ENCODE measurements at regions of chr6 and their contacts with region 1.

Region 1: GRCh38 chr6:110039364-110039980 is 61.4 kb downstream of the GPR6 start:
- DNase-seq: peak; percentile 65
- ATAC-seq: peak; percentile 96
- H3K4me3 ChIP-seq: peak overlapping the region; percentile 73
- H3K27ac ChIP-seq: peak overlapping the region; percentile 17; the same call in 1 of the 2 replicates
- H3K4me1 ChIP-seq: peaks cover 3% of the 10 kb centered on the region
- H3K27me3 ChIP-seq: no peaks in the 10 kb centered on the region
- CTCF ChIP-seq: peak; percentile 90 to 97 (median 92)
- EP300 ChIP-seq: no peak
- POLR2A ChIP-seq: no peak; the same call in 1 of the 2 replicates
- RAD21 ChIP-seq: peak; percentile 98

Region 2: DNA sequence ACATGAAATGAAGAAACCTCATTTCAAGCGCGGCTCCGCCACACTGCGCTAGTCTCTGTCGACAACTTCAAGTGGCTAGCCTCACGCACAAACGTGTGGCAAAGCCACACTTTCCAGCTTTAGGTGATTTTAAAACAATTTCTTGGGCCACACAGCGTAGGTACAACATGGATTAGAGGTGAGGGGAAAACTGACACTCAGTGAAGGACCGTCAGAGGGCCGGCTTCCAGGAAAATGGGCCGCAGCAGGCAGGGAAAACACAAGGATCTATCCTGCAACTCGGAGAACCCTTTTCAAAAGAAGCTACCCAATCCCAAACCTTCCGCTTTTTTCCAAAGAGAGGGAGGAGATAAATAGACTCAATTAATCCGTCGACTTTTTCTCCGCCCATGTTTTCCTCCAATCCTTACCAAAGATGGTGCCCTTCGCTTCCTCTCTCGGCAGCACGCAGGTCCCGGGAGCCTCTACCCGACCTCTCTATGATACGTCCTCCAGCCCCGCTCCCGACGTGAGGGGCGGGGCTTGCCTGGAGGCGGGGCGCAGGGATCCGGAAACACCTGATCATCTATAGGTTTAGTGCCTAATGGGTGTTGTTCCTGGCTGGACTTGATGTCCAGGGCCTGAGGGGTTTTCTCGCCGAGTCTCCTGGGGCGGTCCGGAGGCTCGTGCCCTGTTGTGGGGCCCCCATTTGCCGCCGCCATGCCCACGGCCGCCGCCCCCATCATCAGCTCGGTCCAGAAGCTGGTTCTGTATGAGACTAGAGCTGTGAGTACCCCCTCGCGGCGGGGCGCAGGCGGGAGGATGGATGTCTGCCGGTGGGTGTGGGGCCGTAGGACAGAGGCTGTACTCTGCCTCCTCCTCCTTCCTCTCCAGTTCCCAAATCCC is 348.5 kb before region 1 on chr6 and contains the starts of genes AK9 and FIG4:
- CTCF ChIA-PET with region 1: interaction called, 41 read pairs
- POLR2A ChIA-PET with region 1: no interaction called
- RAD21 ChIA-PET with region 1: interaction called, 13 read pairs
- SMC1A ChIA-PET with region 1: interaction called, 8 read pairs
- in situ Hi-C with region 1: no loop called
- intact Hi-C with region 1: no loop called
- DNase-seq: peak; percentile 61
- ATAC-seq: peak; percentile 97
- H3K4me3 ChIP-seq: peak within 1 kb of the TSS; percentile 91
- H3K27ac ChIP-seq: peak within 1 kb of the TSS; percentile 67
- H3K4me1 ChIP-seq: peaks cover 5% of the 10 kb centered on the region
- H3K27me3 ChIP-seq: no peaks in the 10 kb centered on the region
- CTCF ChIP-seq: peak in 2 of 3 experiments; percentile 16 to 29; a peak in 3 of 6 replicates
- EP300 ChIP-seq: no peak
- POLR2A ChIP-seq: peak; percentile 67
- RAD21 ChIP-seq: peak; percentile 17; the same call in 1 of the 2 replicates
- polyA plus RNA-seq, gene AK9: 4.0 to 5.8 TPM
- polyA plus RNA-seq, gene FIG4: 3.8 to 4.7 TPM

Region 3: GRCh38 chr6:109824105-109824504 is 215.4 kb before region 1 on chr6:
- CTCF ChIA-PET with region 1: interaction called, 11 read pairs
- POLR2A ChIA-PET with region 1: no interaction called
- RAD21 ChIA-PET with region 1: no interaction called
- SMC1A ChIA-PET with region 1: no interaction called
- in situ Hi-C with region 1: no loop called
- intact Hi-C with region 1: no loop called
- DNase-seq: no peak
- ATAC-seq: no peak
- H3K4me3 ChIP-seq: no peak overlapping the region
- H3K27ac ChIP-seq: no peak overlapping the region
- H3K4me1 ChIP-seq: peaks cover 17% of the 10 kb centered on the region
- H3K27me3 ChIP-seq: no peaks in the 10 kb centered on the region
- CTCF ChIP-seq: no peak
- EP300 ChIP-seq: no peak
- POLR2A ChIP-seq: no peak
- RAD21 ChIP-seq: no peak

Region 4: DNA sequence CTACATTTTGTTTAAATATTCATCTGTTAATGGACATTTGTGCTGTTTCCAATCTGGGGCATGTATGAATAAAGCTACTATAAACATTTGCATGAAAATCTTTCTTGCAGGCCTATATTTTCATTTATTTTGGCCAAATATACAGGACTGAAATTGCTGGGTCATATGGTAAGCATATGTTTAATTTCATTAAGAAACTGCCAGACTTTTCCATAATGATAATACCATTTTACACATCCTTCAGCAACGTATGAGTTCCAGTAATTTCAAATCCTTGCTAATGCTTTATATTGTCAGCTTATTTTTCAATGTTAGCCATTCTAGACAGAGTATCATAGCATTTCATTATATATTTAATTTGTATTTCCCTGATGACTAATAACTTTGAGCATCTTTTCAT is 10.3 kb before region 1 on chr6:
- CTCF ChIA-PET with region 1: interaction called, 29 read pairs
- POLR2A ChIA-PET with region 1: no interaction called
- RAD21 ChIA-PET with region 1: interaction called, 4 read pairs
- SMC1A ChIA-PET with region 1: interaction called, 9 read pairs
- in situ Hi-C with region 1: no loop called
- intact Hi-C with region 1: no loop called
- DNase-seq: no peak
- ATAC-seq: no peak
- H3K4me3 ChIP-seq: no peak overlapping the region
- H3K27ac ChIP-seq: no peak overlapping the region
- H3K4me1 ChIP-seq: no peaks in the 10 kb centered on the region
- H3K27me3 ChIP-seq: no peaks in the 10 kb centered on the region
- CTCF ChIP-seq: no peak
- EP300 ChIP-seq: no peak
- POLR2A ChIP-seq: no peak
- RAD21 ChIP-seq: no peak

Region 5: DNA sequence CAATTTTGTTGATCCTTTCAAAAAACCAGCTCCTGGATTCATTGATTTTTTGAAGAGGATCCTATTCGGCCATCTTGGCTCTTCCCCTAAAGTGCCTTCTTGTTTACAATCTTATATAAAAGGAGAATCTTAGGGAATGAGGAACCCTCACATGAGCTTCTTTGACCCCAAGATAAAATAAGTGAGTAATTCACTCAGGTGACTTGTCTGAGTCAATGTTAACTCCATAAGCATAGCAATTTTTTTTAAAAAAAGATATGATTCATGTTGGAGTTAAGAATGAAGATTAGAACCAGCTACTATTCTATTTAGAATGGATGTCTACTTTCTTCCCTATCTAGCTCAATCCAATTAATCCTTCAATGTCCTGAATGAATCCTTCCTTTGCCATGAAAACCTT is 119.0 kb after region 1 on chr6:
- CTCF ChIA-PET with region 1: no interaction called
- POLR2A ChIA-PET with region 1: no interaction called
- RAD21 ChIA-PET with region 1: no interaction called
- SMC1A ChIA-PET with region 1: no interaction called
- in situ Hi-C with region 1: no loop called
- intact Hi-C with region 1: no loop called
- DNase-seq: no peak
- ATAC-seq: no peak
- H3K4me3 ChIP-seq: no peak overlapping the region
- H3K27ac ChIP-seq: no peak overlapping the region
- H3K4me1 ChIP-seq: no peaks in the 10 kb centered on the region
- H3K27me3 ChIP-seq: no peaks in the 10 kb centered on the region
- CTCF ChIP-seq: no peak
- EP300 ChIP-seq: no peak
- POLR2A ChIP-seq: no peak
- RAD21 ChIP-seq: no peak

Region 6: GRCh38 chr6:110389689-110390382 is 350.4 kb after region 1 on chr6:
- CTCF ChIA-PET with region 1: interaction called, 98 read pairs
- POLR2A ChIA-PET with region 1: no interaction called
- RAD21 ChIA-PET with region 1: interaction called, 18 read pairs
- SMC1A ChIA-PET with region 1: interaction called, 55 read pairs
- in situ Hi-C with region 1: no loop called
- intact Hi-C with region 1: loop called (anchors 1 kb)
- DNase-seq: no peak
- ATAC-seq: no peak
- H3K4me3 ChIP-seq: no peak overlapping the region
- H3K27ac ChIP-seq: no peak overlapping the region
- H3K4me1 ChIP-seq: no peaks in the 10 kb centered on the region
- H3K27me3 ChIP-seq: no peaks in the 10 kb centered on the region
- CTCF ChIP-seq: no peak
- EP300 ChIP-seq: no peak
- POLR2A ChIP-seq: no peak
- RAD21 ChIP-seq: no peak